Naive thymus-derived CD4-positive, alpha-beta T cell (primary cell): ENCODE measurements at regions of chr10 and their contacts with region 1.

Region 1: GRCh38 chr10:93496322-93497041 is at the start of gene CEP55:
- DNase-seq: peak; percentile 90 to 97 (median 94)
- ATAC-seq: peak; percentile 100
- H3K4me3 ChIP-seq: peak within 1 kb of the TSS; percentile 100
- H3K4me3 Mint-ChIP-seq: peak within 1 kb of the TSS; percentile 84 to 95 (median 92)
- H3K27ac ChIP-seq: no peak within 1 kb of the TSS
- H3K27ac Mint-ChIP-seq: peak within 1 kb of the TSS in 8 of 9 donors; percentile 13 to 90 (median 72)
- H3K4me1 ChIP-seq: peaks cover 7 to 11% of the 10 kb centered on the region in 2 donors
- H3K4me1 Mint-ChIP-seq: peaks cover 0 to 48% (median 12%) of the 10 kb centered on the region in 7 donors
- H3K27me3 ChIP-seq: no peaks in the 10 kb centered on the region
- H3K27me3 Mint-ChIP-seq: peaks cover 0 to 9% (median 7%) of the 10 kb centered on the region in 5 donors
- total RNA-seq, gene CEP55: 0.54 to 48.6 TPM in 2 of 5 experiments, not detected in the others

Region 2: GRCh38 chr10:92240289-92241157 is 1256.0 kb before region 1 on chr10:
- CTCF ChIA-PET with region 1: no interaction called
- POLR2A ChIA-PET with region 1: no interaction called
- intact Hi-C with region 1: loop called in 1 of 2 experiments (anchors 10 kb)
- DNase-seq: peak in 8 of 9 donors; percentile 19 to 43 (median 28)
- ATAC-seq: peak; percentile 58
- H3K4me3 ChIP-seq: peak overlapping the region; percentile 78
- H3K4me3 Mint-ChIP-seq: peak overlapping the region; percentile 88 to 99 (median 92)
- H3K27ac ChIP-seq: peak overlapping the region; percentile 58
- H3K27ac Mint-ChIP-seq: peak overlapping the region; percentile 31 to 94 (median 71)
- H3K4me1 ChIP-seq: peaks cover 0 to 11% of the 10 kb centered on the region in 2 donors
- H3K4me1 Mint-ChIP-seq: peaks cover 14 to 57% (median 31%) of the 10 kb centered on the region in 7 donors
- H3K27me3 ChIP-seq: no peaks in the 10 kb centered on the region
- H3K27me3 Mint-ChIP-seq: peaks cover 0 to 37% (median 0%) of the 10 kb centered on the region in 5 donors

Region 3: GRCh38 chr10:93115661-93116383 is 380.7 kb before region 1 on chr10:
- CTCF ChIA-PET with region 1: no interaction called
- POLR2A ChIA-PET with region 1: no interaction called
- intact Hi-C with region 1: loop called in 1 of 2 experiments (anchors 5 kb)
- DNase-seq: peak; percentile 51 to 77 (median 69)
- ATAC-seq: peak; percentile 82
- H3K4me3 ChIP-seq: no peak overlapping the region
- H3K4me3 Mint-ChIP-seq: peak overlapping the region in 5 of 10 donors; percentile 21 to 57 (median 41)
- H3K27ac ChIP-seq: no peak overlapping the region
- H3K27ac Mint-ChIP-seq: peak overlapping the region in 8 of 9 donors; percentile 12 to 80 (median 44)
- H3K4me1 ChIP-seq: peaks cover 4 to 15% of the 10 kb centered on the region in 2 donors
- H3K4me1 Mint-ChIP-seq: peaks cover 0 to 50% (median 17%) of the 10 kb centered on the region in 7 donors
- H3K27me3 ChIP-seq: no peaks in the 10 kb centered on the region
- H3K27me3 Mint-ChIP-seq: peaks cover 0 to 27% (median 9%) of the 10 kb centered on the region in 5 donors

Region 4: DNA sequence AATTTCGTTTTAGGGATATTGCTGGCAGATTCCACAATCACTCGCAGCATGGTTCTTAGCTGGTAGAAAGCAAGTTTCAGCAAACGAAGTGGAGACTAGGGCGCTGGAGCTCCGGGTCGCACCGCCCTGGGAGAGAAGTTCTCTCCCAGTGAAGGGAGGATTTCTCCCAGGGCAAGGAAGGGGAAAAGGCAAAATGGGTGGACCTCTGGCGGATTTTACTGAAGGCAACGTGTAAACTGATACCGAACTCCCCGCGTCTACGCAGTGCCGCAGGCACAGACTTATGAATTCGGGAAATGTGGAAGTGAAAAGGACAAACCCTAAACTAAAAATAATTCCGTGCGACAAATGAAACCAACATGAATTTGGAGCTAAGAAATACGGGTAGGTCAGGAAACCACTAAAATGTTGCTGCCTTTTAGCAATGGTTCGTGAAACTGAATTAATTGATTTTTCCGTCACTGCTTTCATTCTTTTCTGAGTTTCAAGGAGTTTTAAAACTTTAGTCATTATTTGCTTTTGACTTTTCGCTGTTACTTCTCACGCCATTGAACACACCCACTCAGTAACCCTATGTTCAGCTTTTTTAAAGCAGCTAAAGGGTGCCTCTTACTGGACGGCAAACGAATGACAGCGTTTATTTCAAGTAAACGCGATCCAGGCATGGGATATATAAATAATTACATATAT is 14.2 kb before region 1 on chr10 and contains the start of gene MYOF:
- CTCF ChIA-PET with region 1: interaction called, 9 read pairs
- POLR2A ChIA-PET with region 1: no interaction called
- intact Hi-C with region 1: loop called (anchors 1 kb)
- DNase-seq: peak in 7 of 9 donors; percentile 45 to 72 (median 64)
- ATAC-seq: peak; percentile 94
- H3K4me3 ChIP-seq: peak within 1 kb of the TSS; percentile 67
- H3K4me3 Mint-ChIP-seq: peak within 1 kb of the TSS; percentile 81 to 95 (median 84)
- H3K27ac ChIP-seq: no peak within 1 kb of the TSS
- H3K27ac Mint-ChIP-seq: peak within 1 kb of the TSS in 3 of 9 donors; percentile 1 to 65 (median 6)
- H3K4me1 ChIP-seq: peaks cover 5 to 6% of the 10 kb centered on the region in 2 donors
- H3K4me1 Mint-ChIP-seq: peaks cover 5 to 19% (median 11%) of the 10 kb centered on the region in 7 donors
- H3K27me3 ChIP-seq: peaks cover 3 to 9% of the 10 kb centered on the region in 2 donors
- H3K27me3 Mint-ChIP-seq: peaks cover 0 to 36% (median 25%) of the 10 kb centered on the region in 5 donors
- total RNA-seq, gene MYOF: 0.57 to 31.2 (median 1.5) TPM

Region 5: GRCh38 chr10:93541402-93542357 is 45.2 kb after region 1 on chr10:
- CTCF ChIA-PET with region 1: no interaction called
- POLR2A ChIA-PET with region 1: no interaction called
- intact Hi-C with region 1: no loop called
- DNase-seq: peak in 1 of 9 donors; percentile 31
- ATAC-seq: peak; percentile 56
- H3K4me3 ChIP-seq: no peak overlapping the region
- H3K4me3 Mint-ChIP-seq: no peak overlapping the region
- H3K27ac ChIP-seq: no peak overlapping the region
- H3K27ac Mint-ChIP-seq: no peak overlapping the region
- H3K4me1 ChIP-seq: no peaks in the 10 kb centered on the region
- H3K4me1 Mint-ChIP-seq: peaks cover 0 to 3% (median 0%) of the 10 kb centered on the region in 7 donors
- H3K27me3 ChIP-seq: no peaks in the 10 kb centered on the region
- H3K27me3 Mint-ChIP-seq: peaks cover 0 to 38% (median 6%) of the 10 kb centered on the region in 5 donors

Region 6: GRCh38 chr10:93893646-93894515 is 397.4 kb after region 1 on chr10 and contains the start of gene SLC35G1:
- CTCF ChIA-PET with region 1: no interaction called
- POLR2A ChIA-PET with region 1: no interaction called
- intact Hi-C with region 1: loop called in 1 of 2 experiments (anchors 5 kb)
- DNase-seq: peak; percentile 48 to 75 (median 66)
- ATAC-seq: peak; percentile 89
- H3K4me3 ChIP-seq: peak within 1 kb of the TSS; percentile 72
- H3K4me3 Mint-ChIP-seq: peak within 1 kb of the TSS; percentile 81 to 91 (median 86)
- H3K27ac ChIP-seq: peak within 1 kb of the TSS; percentile 62
- H3K27ac Mint-ChIP-seq: peak within 1 kb of the TSS; percentile 56 to 81 (median 74)
- H3K4me1 ChIP-seq: peaks cover 6 to 18% of the 10 kb centered on the region in 2 donors
- H3K4me1 Mint-ChIP-seq: peaks cover 23 to 47% (median 40%) of the 10 kb centered on the region in 7 donors
- H3K27me3 ChIP-seq: no peaks in the 10 kb centered on the region
- H3K27me3 Mint-ChIP-seq: peaks cover 0 to 9% (median 7%) of the 10 kb centered on the region in 5 donors
- total RNA-seq, gene SLC35G1: 2.4 to 7.2 (median 3.5) TPM

Region 7: DNA sequence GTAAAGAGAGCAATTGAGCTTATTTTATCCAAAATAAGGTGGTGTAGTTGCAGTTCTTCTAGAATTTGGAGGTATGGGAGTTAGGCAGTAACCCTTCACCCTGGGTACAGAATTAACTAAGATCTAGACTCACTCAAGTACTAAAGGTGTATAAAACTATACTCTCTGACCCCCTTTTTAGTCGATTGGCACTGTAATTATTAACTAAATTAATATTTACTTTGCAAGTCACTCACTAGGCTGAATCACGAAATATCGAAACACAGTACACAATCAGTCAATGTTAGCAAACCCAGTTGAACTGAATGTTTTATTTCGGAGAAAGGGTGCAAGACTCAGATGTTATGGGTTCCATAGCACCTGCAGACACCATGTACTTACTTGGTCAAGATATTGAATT is 1251.4 kb after region 1 on chr10:
- CTCF ChIA-PET with region 1: no interaction called
- POLR2A ChIA-PET with region 1: no interaction called
- intact Hi-C with region 1: no loop called
- DNase-seq: no peak
- ATAC-seq: no peak
- H3K4me3 ChIP-seq: no peak overlapping the region
- H3K4me3 Mint-ChIP-seq: no peak overlapping the region
- H3K27ac ChIP-seq: no peak overlapping the region
- H3K27ac Mint-ChIP-seq: no peak overlapping the region
- H3K4me1 ChIP-seq: no peaks in the 10 kb centered on the region
- H3K4me1 Mint-ChIP-seq: no peaks in the 10 kb centered on the region
- H3K27me3 ChIP-seq: no peaks in the 10 kb centered on the region
- H3K27me3 Mint-ChIP-seq: no peaks in the 10 kb centered on the region